Ovary (tissue), 10 donors: ENCODE measurements at regions of chr7 and their contacts with region 1.

Region 1: GRCh38 chr7:77587272-77587671 is 50.2 kb downstream of the PTPN12 start:
- DNase-seq: no peak
- H3K4me3 ChIP-seq: no peak overlapping the region
- H3K27ac ChIP-seq: no peak overlapping the region
- H3K4me1 ChIP-seq: no peaks in the 10 kb centered on the region
- H3K27me3 ChIP-seq: no peaks in the 10 kb centered on the region
- CTCF ChIP-seq: no peak
- EP300 ChIP-seq: no peak
- POLR2A ChIP-seq: no peak

Region 2: GRCh38 chr7:78742694-78743093 is 1155.4 kb after region 1 on chr7:
- intact Hi-C with region 1: loop called in 1 of 4 experiments (anchors 5 kb)
- DNase-seq: no peak
- H3K4me3 ChIP-seq: no peak overlapping the region
- H3K27ac ChIP-seq: no peak overlapping the region
- H3K4me1 ChIP-seq: no peaks in the 10 kb centered on the region
- H3K27me3 ChIP-seq: no peaks in the 10 kb centered on the region
- CTCF ChIP-seq: no peak
- EP300 ChIP-seq: no peak
- POLR2A ChIP-seq: no peak